ENCODE measurements at regions of chr1 and their contacts with region 1.

Region 1: GRCh38 chr1:223712194-223712849 is at the start of gene CAPN2:
- DNase-seq: peak; percentile 55
- H3K4me3 Mint-ChIP-seq: peak within 1 kb of the TSS; percentile 78
- H3K27ac Mint-ChIP-seq: peak within 1 kb of the TSS; percentile 83
- H3K4me1 Mint-ChIP-seq: peaks cover 57% of the 10 kb centered on the region
- H3K27me3 Mint-ChIP-seq: no peaks in the 10 kb centered on the region
- total RNA-seq, gene CAPN2: 91.3 and 93.5 TPM in 2 replicates

Region 2: DNA sequence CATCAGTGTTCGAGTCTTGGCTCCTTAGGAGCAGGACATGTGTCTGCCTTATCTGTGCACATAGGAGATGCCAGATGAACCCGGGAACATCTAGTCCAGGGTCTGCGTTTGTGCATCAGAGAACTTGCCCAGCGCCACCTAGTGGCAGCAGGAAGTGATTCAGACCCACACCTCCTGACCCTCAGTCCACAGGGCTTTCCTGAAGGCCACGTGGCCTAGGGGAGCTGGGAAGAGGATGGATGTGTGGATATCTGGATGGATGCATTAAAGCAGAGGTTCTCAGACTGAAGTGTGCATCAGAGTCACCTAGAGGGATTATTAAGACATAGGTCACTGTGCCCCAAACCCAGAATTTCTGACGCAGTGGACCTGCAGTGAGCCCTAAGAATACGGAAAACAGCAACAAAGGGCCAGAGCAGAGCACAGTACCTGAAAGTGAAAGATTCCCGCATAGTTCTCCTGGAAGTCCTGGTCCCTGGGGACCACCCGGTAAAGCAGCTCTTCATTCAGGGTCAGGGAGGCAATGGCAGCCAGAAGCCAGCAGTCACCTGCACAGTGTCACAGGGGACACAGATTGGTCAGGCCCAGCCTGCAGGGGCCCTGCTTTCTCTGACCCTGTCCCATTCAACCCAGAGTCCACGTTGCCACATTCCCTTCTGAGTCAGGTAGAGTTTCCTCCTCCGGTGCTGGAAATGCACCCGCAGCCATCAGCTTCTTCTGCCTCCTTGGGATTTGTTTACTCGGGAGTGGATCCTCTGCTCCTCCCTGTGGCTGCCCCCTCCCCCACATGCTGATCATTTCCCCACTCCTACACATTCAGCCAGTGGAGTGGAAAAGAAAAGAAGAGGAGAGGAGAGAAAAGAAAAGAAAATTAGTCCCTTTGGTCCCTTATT is 83.8 kb before region 1 on chr1:
- intact Hi-C with region 1: no loop called
- DNase-seq: peak; percentile 21
- H3K4me3 Mint-ChIP-seq: no peak overlapping the region
- H3K27ac Mint-ChIP-seq: no peak overlapping the region
- H3K4me1 Mint-ChIP-seq: no peaks in the 10 kb centered on the region
- H3K27me3 Mint-ChIP-seq: peaks cover 1% of the 10 kb centered on the region

Region 3: GRCh38 chr1:223700942-223701637 is 11.2 kb before region 1 on chr1:
- intact Hi-C with region 1: loop called (anchors 1 kb)
- DNase-seq: no peak
- H3K4me3 Mint-ChIP-seq: no peak overlapping the region
- H3K27ac Mint-ChIP-seq: peak overlapping the region; percentile 87
- H3K4me1 Mint-ChIP-seq: peaks cover 45% of the 10 kb centered on the region
- H3K27me3 Mint-ChIP-seq: no peaks in the 10 kb centered on the region

Region 4: GRCh38 chr1:223726380-223727001 is 14.2 kb after region 1 on chr1:
- intact Hi-C with region 1: loop called (anchors 2 kb)
- DNase-seq: peak; percentile 79
- H3K4me3 Mint-ChIP-seq: peak overlapping the region; percentile 72
- H3K27ac Mint-ChIP-seq: peak overlapping the region; percentile 97
- H3K4me1 Mint-ChIP-seq: peaks cover 64% of the 10 kb centered on the region
- H3K27me3 Mint-ChIP-seq: no peaks in the 10 kb centered on the region

Region 5: GRCh38 chr1:223748773-223749733 is 36.7 kb after region 1 on chr1:
- intact Hi-C with region 1: loop called (anchors 1 kb)
- DNase-seq: peak; percentile 45
- H3K4me3 Mint-ChIP-seq: peak overlapping the region; percentile 53
- H3K27ac Mint-ChIP-seq: peak overlapping the region; percentile 7
- H3K4me1 Mint-ChIP-seq: peaks cover 15% of the 10 kb centered on the region
- H3K27me3 Mint-ChIP-seq: no peaks in the 10 kb centered on the region

Region 6: GRCh38 chr1:223831755-223832636 is 119.7 kb after region 1 on chr1:
- intact Hi-C with region 1: loop called (anchors 5 kb)
- DNase-seq: no peak
- H3K4me3 Mint-ChIP-seq: peak overlapping the region; percentile 54
- H3K27ac Mint-ChIP-seq: peak overlapping the region; percentile 92
- H3K4me1 Mint-ChIP-seq: peaks cover 24% of the 10 kb centered on the region
- H3K27me3 Mint-ChIP-seq: no peaks in the 10 kb centered on the region

Region 7: DNA sequence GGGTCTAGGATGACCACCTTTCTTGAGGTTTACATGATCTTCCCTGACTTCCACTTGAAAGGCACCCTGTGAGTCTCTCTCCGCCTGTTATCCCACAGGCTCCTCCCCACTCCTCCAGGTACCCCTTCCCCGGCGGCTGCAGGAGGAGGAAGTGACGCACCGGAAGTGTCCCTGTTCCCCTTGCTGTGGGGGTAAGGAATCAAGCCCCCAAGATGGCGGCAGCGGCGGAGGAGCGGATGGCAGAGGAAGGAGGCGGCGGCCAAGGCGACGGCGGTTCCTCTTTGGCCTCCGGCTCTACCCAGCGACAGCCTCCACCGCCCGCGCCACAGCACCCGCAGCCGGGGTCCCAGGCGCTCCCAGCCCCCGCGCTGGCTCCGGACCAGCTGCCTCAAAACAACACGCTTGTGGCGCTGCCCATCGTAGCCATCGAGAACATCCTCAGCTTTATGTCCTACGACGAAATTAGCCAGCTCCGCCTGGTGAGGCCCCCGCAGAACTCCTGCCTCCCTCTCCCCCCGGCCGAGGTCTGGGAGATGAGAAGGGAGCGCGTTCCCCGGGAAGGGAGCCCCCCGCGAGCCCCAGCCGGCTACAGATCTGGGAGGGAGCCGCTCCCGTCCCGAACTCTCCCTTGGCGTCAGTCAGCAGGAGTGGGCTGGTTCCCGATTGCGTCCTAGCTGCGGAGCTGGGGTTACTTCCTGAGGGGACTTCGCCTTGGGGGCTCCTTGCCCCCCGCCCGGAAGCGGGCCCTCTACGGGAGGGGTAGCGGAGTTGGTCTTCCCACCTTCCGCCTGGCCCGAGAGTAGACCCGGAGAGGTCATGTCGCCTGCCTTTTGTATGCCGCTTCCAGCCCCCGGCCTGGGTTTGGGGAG is 401.8 kb after region 1 on chr1 and contains the start of gene FBXO28:
- intact Hi-C with region 1: loop called (anchors 10 kb)
- DNase-seq: peak; percentile 90
- H3K4me3 Mint-ChIP-seq: peak within 1 kb of the TSS; percentile 80
- H3K27ac Mint-ChIP-seq: peak within 1 kb of the TSS; percentile 79
- H3K4me1 Mint-ChIP-seq: peaks cover 25% of the 10 kb centered on the region
- H3K27me3 Mint-ChIP-seq: peaks cover 17% of the 10 kb centered on the region
- total RNA-seq, gene FBXO28: 22.9 and 24.3 TPM in 2 replicates